T-cell (primary cell): ENCODE measurements at regions of chr22 and their contacts with region 1.

Region 1: DNA sequence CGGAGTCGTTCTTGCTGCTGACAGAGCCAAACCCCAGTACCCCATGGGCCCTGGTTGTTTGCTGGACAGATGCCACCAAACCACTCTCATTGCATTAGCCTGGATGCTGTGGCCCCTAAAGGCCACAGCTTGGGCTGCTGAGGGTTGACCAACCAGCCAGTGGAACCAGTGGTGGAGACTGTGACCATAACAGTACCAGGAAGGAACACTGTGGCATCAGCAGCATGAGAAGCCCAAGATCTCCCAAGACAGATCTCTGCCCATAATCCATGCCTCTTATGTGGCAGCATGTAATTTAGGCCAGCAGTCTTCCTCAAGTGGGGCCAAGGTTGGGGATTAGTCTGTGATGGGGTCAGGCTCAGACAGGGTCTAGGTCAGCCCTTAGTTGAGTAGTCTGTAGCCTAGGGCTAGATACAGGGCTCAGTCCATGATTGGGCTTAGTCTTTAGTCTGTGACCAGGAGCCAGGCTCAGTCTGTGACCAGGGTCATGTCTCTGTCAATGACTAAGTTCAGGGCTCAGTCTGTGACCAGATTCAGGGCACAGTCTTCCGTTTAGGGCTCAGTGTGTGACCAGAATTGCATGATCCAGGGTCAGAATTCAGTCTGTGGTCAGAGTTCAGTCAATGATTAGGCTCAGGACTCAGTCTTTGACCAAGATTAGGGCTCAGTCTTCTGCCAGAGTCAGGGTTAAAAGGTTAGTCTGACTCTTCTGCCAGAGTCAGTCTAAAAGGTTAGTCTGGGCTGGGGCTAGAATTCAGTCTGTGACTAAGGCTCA is 4.5 kb upstream of the INPP5J start:
- DNase-seq: no peak
- ATAC-seq: no peak
- H3K4me3 ChIP-seq: no peak overlapping the region
- H3K4me3 Mint-ChIP-seq: no peak overlapping the region
- H3K27ac ChIP-seq: no peak overlapping the region
- H3K27ac Mint-ChIP-seq: no peak overlapping the region
- H3K4me1 ChIP-seq: no peaks in the 10 kb centered on the region
- H3K4me1 Mint-ChIP-seq: no peaks in the 10 kb centered on the region
- H3K27me3 ChIP-seq: no peaks in the 10 kb centered on the region
- H3K27me3 Mint-ChIP-seq: no peaks in the 10 kb centered on the region

Region 2: DNA sequence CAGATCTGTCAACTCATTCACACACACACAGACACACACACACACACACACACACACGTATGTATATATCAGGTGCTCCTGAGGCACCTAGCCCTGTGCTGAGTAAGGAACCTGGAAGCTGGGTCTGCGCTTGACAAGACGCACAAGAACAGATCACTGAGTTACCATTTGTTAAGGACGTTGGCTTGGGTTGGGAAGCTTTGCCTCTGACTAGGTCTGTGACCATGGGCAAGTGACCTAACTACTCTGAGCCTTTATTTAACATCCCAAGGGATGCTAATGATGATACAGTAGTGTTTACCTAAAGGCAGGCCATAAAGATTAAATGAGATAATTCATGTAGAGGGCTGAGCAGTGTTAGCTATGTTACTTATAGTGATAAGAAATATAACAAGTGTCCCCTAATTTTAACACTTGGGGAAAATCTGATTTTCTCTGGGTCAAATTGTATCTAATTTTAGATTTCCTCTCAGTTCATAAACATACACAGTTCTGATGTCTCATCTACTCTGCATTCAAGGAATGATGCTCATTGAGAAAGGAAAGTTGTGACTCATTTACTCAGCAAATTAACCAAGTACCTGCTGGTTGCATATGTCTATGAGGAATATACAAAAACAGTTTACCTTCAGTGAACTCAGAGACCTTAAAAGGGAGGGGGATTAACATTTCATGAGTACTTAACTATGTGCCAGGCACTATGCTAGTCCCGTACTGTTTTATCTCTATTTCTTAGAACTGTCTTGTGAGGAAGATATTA is 55.3 kb after region 1 on chr22:
- CTCF ChIA-PET with region 1: no interaction called
- POLR2A ChIA-PET with region 1: interaction called in 1 of 2 experiments, 10 read pairs
- DNase-seq: no peak
- ATAC-seq: no peak
- H3K4me3 ChIP-seq: no peak overlapping the region
- H3K4me3 Mint-ChIP-seq: no peak overlapping the region
- H3K27ac ChIP-seq: no peak overlapping the region
- H3K27ac Mint-ChIP-seq: no peak overlapping the region
- H3K4me1 ChIP-seq: peaks cover 0 to 7% of the 10 kb centered on the region in 2 experiments
- H3K4me1 Mint-ChIP-seq: peaks cover 32 to 43% (median 38%) of the 10 kb centered on the region in 3 donors
- H3K27me3 ChIP-seq: no peaks in the 10 kb centered on the region
- H3K27me3 Mint-ChIP-seq: no peaks in the 10 kb centered on the region

Region 3: GRCh38 chr22:31185056-31185455 is 66.8 kb after region 1 on chr22:
- CTCF ChIA-PET with region 1: no interaction called
- POLR2A ChIA-PET with region 1: no interaction called
- DNase-seq: no peak
- ATAC-seq: no peak
- H3K4me3 ChIP-seq: no peak overlapping the region
- H3K4me3 Mint-ChIP-seq: no peak overlapping the region
- H3K27ac ChIP-seq: no peak overlapping the region
- H3K27ac Mint-ChIP-seq: no peak overlapping the region
- H3K4me1 ChIP-seq: no peaks in the 10 kb centered on the region
- H3K4me1 Mint-ChIP-seq: no peaks in the 10 kb centered on the region
- H3K27me3 ChIP-seq: no peaks in the 10 kb centered on the region
- H3K27me3 Mint-ChIP-seq: no peaks in the 10 kb centered on the region

Region 4: GRCh38 chr22:31488346-31488883 is 370.2 kb after region 1 on chr22:
- CTCF ChIA-PET with region 1: no interaction called
- POLR2A ChIA-PET with region 1: no interaction called
- DNase-seq: peak in 1 of 35 experiments; percentile 9
- ATAC-seq: no peak
- H3K4me3 ChIP-seq: peak overlapping the region in 1 of 2 donors; percentile 51
- H3K4me3 Mint-ChIP-seq: peak overlapping the region; percentile 79 to 81 (median 81)
- H3K27ac ChIP-seq: peak overlapping the region; percentile 40
- H3K27ac Mint-ChIP-seq: peak overlapping the region; percentile 84 to 85
- H3K4me1 ChIP-seq: peaks cover 15 to 29% of the 10 kb centered on the region in 2 experiments
- H3K4me1 Mint-ChIP-seq: peaks cover 47 to 56% (median 56%) of the 10 kb centered on the region in 3 donors
- H3K27me3 ChIP-seq: no peaks in the 10 kb centered on the region
- H3K27me3 Mint-ChIP-seq: no peaks in the 10 kb centered on the region